GM18951 (cell line): ENCODE measurements at regions of chr2 and their contacts with region 1.

Region 1: DNA sequence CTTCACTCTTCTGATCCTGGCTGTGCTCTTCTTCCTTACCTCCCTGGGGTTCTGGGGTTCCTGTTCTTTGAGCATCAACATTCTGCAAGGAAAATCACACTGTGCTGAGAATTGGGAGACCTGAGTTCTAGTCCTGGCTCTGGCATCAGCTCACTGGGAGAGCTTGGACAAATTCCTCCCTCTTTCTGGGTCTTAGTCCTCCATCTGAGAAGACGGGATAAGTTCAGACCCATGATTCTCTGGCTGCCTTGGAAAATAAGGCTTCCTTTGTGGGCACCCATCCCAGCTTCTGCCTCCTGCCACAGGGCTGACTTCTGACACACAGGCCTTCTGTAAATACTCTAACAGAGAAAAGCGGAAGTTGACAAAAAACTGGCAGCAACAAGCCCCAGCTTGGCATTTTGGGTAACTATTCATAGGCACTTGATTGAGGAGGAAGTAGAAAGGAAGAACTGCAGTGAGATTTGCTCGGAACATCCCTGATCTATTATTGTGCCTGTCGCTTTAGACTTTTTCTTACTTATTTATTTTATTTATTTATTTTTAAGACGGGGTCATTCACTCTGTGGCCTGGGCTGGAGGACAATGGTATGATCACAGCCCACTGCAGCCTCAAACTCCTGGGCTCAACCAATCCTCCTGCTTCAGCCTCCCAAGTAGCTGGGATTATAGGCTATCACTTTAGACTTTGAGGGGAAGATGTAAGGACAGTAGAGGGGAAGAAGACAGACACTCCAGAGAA is 7.9 kb downstream of the PCBP1 start:
- POLR2A ChIP-seq: no peak

Region 2: GRCh38 chr2:70137519-70137918 is 42.4 kb after region 1 on chr2:
- in situ Hi-C with region 1: loop called (anchors 5 kb)
- POLR2A ChIP-seq: no peak

Region 3: GRCh38 chr2:70181363-70181956 is 86.3 kb after region 1 on chr2:
- in situ Hi-C with region 1: no loop called
- POLR2A ChIP-seq: no peak